Left lung (tissue), 14 donors: ENCODE measurements at regions of chr14 and their contacts with region 1.

Region 1: GRCh38 chr14:55160989-55161388 is 30.4 kb downstream of the DLGAP5 start:
- DNase-seq: peak in 2 of 4 donors; percentile 12 to 34
- ATAC-seq: peak; percentile 90
- H3K4me3 ChIP-seq: no peak overlapping the region
- H3K27ac ChIP-seq: no peak overlapping the region
- H3K4me1 ChIP-seq: no peaks in the 10 kb centered on the region
- H3K27me3 ChIP-seq: no peaks in the 10 kb centered on the region
- CTCF ChIP-seq: peak; percentile 41 to 66

Region 2: DNA sequence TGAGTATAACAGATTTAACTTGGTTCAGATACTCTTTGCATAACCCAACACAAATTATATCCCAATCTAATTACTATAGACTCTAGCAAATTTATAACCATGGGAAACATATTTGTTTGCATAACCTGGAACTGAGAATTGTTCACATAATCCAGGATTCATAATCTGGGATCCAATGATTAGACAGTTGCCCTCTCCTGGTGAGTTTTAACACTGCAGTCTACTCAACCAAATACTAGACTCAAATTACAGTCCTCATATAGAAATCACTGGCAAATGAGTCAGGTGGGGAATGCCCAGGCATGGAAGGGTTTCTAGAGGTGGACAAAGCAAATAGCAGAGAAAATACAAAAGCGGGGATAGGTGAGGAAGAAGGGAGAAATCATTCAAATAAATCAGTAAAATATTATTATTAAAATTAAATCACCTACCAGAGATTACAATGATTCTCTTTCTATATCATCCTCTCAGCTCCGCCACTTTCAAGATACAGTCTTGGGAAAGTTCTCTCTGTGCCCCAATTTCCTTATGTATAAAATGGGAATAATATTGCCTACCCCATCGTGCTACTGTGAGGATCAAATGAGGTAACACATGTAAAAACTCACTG is 267.7 kb before region 1 on chr14:
- intact Hi-C with region 1: loop called in 1 of 2 experiments (anchors 10 kb)
- DNase-seq: peak in 1 of 4 donors; percentile 28
- ATAC-seq: peak; percentile 85
- H3K4me3 ChIP-seq: no peak overlapping the region
- H3K27ac ChIP-seq: no peak overlapping the region
- H3K4me1 ChIP-seq: peaks cover 3 to 40% of the 10 kb centered on the region in 2 donors
- H3K27me3 ChIP-seq: no peaks in the 10 kb centered on the region
- CTCF ChIP-seq: peak; percentile 75 to 89

Region 3: GRCh38 chr14:55005071-55005470 is 155.9 kb before region 1 on chr14:
- intact Hi-C with region 1: no loop called
- DNase-seq: no peak
- ATAC-seq: no peak
- H3K4me3 ChIP-seq: no peak overlapping the region
- H3K27ac ChIP-seq: no peak overlapping the region
- H3K4me1 ChIP-seq: peaks cover 0 to 4% of the 10 kb centered on the region in 2 donors
- H3K27me3 ChIP-seq: no peaks in the 10 kb centered on the region
- CTCF ChIP-seq: no peak